HEK293T (cell line): ENCODE measurements at regions of chr22 and their contacts with region 1.

Region 1: DNA sequence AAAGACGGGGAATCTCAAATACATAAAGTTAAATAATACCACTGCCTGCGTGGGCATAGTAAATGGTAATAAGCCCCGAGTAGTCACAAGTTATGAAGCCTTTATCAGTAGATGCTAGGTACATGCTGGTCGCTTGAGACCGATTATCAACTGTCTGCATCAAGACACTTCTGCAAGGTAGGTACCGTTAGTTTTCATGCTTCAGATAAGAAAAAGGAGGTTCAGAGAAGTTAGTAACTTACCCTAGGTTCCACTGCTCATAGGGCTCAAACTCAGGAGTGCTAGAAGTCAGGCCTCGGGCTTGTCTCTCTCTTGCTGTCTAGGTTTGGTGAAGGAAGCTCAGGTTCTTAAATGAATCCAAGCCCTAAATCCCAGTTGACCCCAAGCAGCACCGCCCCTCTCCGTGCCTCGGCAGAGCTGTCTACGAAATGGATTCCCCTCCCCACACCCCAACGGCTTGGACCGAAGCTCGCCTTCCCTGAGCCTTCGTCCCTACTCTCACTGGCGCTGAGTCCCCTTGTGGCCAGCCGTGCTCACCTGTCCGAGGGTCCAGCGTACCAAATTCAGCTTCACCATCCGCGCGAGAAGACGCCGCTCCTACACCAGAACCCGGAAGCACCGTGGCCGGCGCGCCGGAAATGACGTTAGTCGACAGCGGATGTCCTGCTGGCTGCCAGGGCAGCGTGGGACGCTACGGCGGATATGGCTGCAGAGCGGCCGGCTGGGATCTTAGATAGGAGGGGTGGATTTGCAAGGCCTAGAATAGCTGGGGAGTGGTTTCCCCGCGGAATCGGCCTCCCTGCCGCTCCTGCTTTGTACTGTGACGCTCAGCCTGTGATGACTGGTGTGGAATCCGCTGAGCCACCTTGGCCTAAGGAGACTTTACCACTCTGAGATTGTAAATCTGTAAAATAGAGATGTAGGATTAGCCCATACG is at the start of gene TFIP11:
- DNase-seq: peak; percentile 100

Region 2: GRCh38 chr22:26483439-26484359 is 28.4 kb before region 1 on chr22 and contains the starts of genes HPS4 and SRRD:
- CTCF ChIA-PET with region 1: no interaction called
- POLR2A ChIA-PET with region 1: interaction called, 14 read pairs
- DNase-seq: peak; percentile 99